Activated CD4-positive, alpha-beta T cell treated with anti-CD3 and anti-CD28 coated beads for 36 hours (primary cell): ENCODE measurements at regions of chr22 and their contacts with region 1.

Region 1: GRCh38 chr22:42662114-42663021 is 13.2 kb upstream of the CYB5R3 start:
- DNase-seq: peak; percentile 90
- ATAC-seq: peak; percentile 89
- H3K4me3 Mint-ChIP-seq: peak overlapping the region; percentile 49
- H3K27ac Mint-ChIP-seq: no peak overlapping the region
- H3K4me1 Mint-ChIP-seq: no peaks in the 10 kb centered on the region
- H3K27me3 Mint-ChIP-seq: peaks cover 2% of the 10 kb centered on the region

Region 2: DNA sequence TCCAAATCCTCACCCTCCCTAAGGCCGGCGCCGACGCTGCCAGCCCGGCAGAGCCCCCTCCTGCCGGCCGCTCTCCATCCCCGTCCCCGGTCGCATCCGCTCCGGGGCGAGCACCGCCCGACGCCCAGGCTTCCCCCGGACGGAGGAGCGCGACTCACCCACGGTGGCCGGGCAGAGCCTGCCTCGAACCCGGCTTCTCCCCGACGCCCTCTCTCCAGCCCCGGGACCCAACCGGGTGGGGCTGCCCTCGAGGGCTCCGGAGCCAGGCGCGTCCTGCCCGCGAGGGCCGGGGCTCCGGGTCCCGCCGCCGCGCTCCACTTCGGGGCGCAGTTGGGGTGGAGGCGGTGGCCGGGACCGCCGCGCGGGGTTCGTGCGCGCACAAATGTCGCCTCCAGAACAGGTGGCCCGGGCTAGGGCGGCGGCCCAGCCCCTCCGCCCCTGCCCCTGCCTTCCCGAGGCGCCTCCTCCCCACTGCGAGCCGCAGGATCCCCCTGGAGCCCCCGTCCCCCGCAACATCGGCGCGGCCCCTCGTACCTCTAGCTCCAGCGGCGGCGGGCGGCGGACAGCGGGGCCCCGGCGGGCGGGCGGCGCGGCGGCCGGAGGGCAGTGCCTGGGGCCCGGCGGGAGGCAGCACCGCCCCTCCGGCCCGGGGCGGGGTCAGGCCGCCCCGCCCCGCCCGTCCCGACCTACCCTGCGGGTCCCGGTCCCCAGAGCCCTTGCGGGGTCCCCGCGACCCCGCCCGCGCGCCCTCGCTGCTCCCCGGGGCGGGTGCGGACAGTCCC is 58.1 kb after region 1 on chr22 and contains the start of gene A4GALT:
- CTCF ChIA-PET with region 1: no interaction called
- POLR2A ChIA-PET with region 1: no interaction called
- intact Hi-C with region 1: loop called in 1 of 2 experiments (anchors 5 kb)
- DNase-seq: peak; percentile 14
- ATAC-seq: peak; percentile 63
- H3K4me3 Mint-ChIP-seq: peak within 1 kb of the TSS; percentile 44
- H3K27ac Mint-ChIP-seq: no peak within 1 kb of the TSS
- H3K4me1 Mint-ChIP-seq: peaks cover 10% of the 10 kb centered on the region
- H3K27me3 Mint-ChIP-seq: peaks cover 58% of the 10 kb centered on the region
- total RNA-seq, gene A4GALT: not detected

Region 3: GRCh38 chr22:42820066-42820763 is 157.8 kb after region 1 on chr22:
- CTCF ChIA-PET with region 1: interaction called, 6 read pairs
- POLR2A ChIA-PET with region 1: no interaction called
- intact Hi-C with region 1: loop called in 1 of 2 experiments (anchors 2 kb)
- DNase-seq: no peak
- ATAC-seq: no peak
- H3K4me3 Mint-ChIP-seq: no peak overlapping the region
- H3K27ac Mint-ChIP-seq: no peak overlapping the region
- H3K4me1 Mint-ChIP-seq: peaks cover 5% of the 10 kb centered on the region
- H3K27me3 Mint-ChIP-seq: no peaks in the 10 kb centered on the region

Region 4: DNA sequence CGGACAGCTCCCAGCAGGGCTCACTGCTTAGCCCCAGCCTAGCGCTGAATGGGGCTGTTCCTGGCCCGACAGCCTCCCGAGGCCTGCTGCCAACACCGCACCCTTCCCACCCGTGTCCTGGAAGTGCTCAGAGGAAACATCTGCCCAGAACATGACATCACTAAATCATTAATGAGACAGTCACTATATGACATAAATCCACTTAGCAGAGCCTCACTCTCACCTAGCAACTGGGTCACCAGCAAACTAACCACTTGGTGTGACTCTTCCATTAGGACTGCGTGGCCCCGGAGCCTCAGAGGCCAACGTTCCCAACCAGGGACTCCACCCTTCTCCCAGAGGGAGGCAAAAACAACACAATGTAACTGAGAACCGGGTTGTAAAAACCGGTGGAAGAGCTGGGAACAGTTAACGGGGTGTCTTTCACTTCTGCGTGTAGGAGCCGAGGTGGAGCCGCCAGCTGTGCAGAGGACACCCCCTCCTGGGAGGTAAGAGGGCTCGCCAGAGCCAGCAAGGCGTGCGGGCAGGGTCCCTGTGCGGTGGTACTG is 374.0 kb after region 1 on chr22:
- CTCF ChIA-PET with region 1: no interaction called
- POLR2A ChIA-PET with region 1: no interaction called
- intact Hi-C with region 1: loop called in 1 of 2 experiments (anchors 1 kb)
- DNase-seq: no peak
- ATAC-seq: no peak
- H3K4me3 Mint-ChIP-seq: no peak overlapping the region
- H3K27ac Mint-ChIP-seq: no peak overlapping the region
- H3K4me1 Mint-ChIP-seq: peaks cover 4% of the 10 kb centered on the region
- H3K27me3 Mint-ChIP-seq: no peaks in the 10 kb centered on the region